ENCODE measurements at regions of chr17 and their contacts with region 1.

Region 1: GRCh38 chr17:45218895-45219661 is 2.6 kb upstream of the FMNL1 start:
- DNase-seq: peak; percentile 77
- ATAC-seq: peak; percentile 90
- H3K4me3 ChIP-seq: no peak overlapping the region
- H3K27ac ChIP-seq: no peak overlapping the region
- H3K4me1 ChIP-seq: peaks cover 9% of the 10 kb centered on the region; the same call in 1 of the 2 replicates
- H3K27me3 ChIP-seq: peaks cover 15% of the 10 kb centered on the region
- CTCF ChIP-seq: peak; percentile 98
- POLR2A ChIP-seq: peak; percentile 39; the same call in 1 of the 2 replicates
- RAD21 ChIP-seq: peak; percentile 97

Region 2: DNA sequence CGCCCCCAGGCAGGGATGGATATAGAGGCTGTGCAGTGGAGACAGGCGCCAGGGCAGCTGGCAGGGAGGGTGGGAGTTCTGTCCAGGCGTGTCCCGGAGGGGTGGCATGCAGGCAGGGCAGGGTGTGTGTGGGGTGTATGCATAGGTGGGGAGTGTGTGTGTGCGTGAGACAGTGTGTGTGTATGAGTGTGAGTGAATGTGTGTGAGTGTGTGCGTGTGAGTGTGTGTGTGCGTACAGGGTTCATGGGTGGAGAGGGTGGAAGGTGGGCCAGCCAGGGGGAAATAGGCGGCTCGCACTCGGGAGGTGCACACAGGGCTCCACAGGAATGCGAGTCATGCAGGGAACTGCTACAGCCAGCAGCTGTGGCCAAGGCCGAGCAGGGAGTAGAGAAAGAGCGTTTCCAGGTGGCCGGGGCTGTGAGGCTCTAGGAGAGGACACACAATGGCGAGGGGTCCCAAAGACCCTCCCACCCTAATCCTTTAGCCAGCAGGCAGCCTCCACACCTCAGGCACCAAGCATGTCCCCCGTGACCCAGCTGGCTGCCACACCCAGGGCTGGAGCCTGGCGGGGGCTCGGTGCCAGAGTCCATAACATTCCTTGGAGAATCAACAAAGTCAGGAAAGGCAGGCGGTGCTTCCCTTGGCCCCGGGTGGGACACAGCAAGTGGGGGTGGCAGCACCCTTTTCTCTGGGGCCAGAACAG is 91.3 kb before region 1 on chr17:
- CTCF ChIA-PET with region 1: no interaction called
- POLR2A ChIA-PET with region 1: no interaction called
- dilution Hi-C with region 1: no loop called
- in situ Hi-C with region 1: no loop called
- intact Hi-C with region 1: no loop called
- DNase-seq: peak; percentile 42
- ATAC-seq: peak; percentile 15
- H3K4me3 ChIP-seq: no peak overlapping the region
- H3K27ac ChIP-seq: peak overlapping the region; percentile 88
- H3K4me1 ChIP-seq: peaks cover 49% of the 10 kb centered on the region
- H3K27me3 ChIP-seq: no peaks in the 10 kb centered on the region
- CTCF ChIP-seq: no peak
- POLR2A ChIP-seq: no peak
- RAD21 ChIP-seq: no peak

Region 3: GRCh38 chr17:45270828-45271418 is 51.8 kb after region 1 on chr17:
- CTCF ChIA-PET with region 1: no interaction called
- POLR2A ChIA-PET with region 1: no interaction called
- dilution Hi-C with region 1: no loop called
- in situ Hi-C with region 1: no loop called
- intact Hi-C with region 1: loop called (anchors 1 kb)
- DNase-seq: no peak
- ATAC-seq: no peak
- H3K4me3 ChIP-seq: no peak overlapping the region
- H3K27ac ChIP-seq: no peak overlapping the region
- H3K4me1 ChIP-seq: peaks cover 6% of the 10 kb centered on the region
- H3K27me3 ChIP-seq: no peaks in the 10 kb centered on the region
- CTCF ChIP-seq: peak; percentile 47
- POLR2A ChIP-seq: no peak
- RAD21 ChIP-seq: peak; percentile 41

Region 4: GRCh38 chr17:45317112-45317928 is 98.2 kb after region 1 on chr17:
- CTCF ChIA-PET with region 1: no interaction called
- POLR2A ChIA-PET with region 1: no interaction called
- dilution Hi-C with region 1: no loop called
- in situ Hi-C with region 1: no loop called
- intact Hi-C with region 1: loop called (anchors 5 kb)
- DNase-seq: peak; percentile 100
- ATAC-seq: peak; percentile 85
- H3K4me3 ChIP-seq: peak overlapping the region; percentile 42
- H3K27ac ChIP-seq: peak overlapping the region; percentile 62
- H3K4me1 ChIP-seq: peaks cover 47% of the 10 kb centered on the region
- H3K27me3 ChIP-seq: no peaks in the 10 kb centered on the region
- CTCF ChIP-seq: no peak
- POLR2A ChIP-seq: no peak
- RAD21 ChIP-seq: 0 out of 2 replicates have a peak, but pooled peaks have one; percentile 14

Region 5: GRCh38 chr17:45428050-45428617 is 209.1 kb after region 1 on chr17:
- CTCF ChIA-PET with region 1: no interaction called
- POLR2A ChIA-PET with region 1: no interaction called
- dilution Hi-C with region 1: no loop called
- in situ Hi-C with region 1: no loop called
- intact Hi-C with region 1: loop called (anchors 2 kb)
- DNase-seq: peak; percentile 42
- ATAC-seq: peak; percentile 78
- H3K4me3 ChIP-seq: no peak overlapping the region
- H3K27ac ChIP-seq: no peak overlapping the region
- H3K4me1 ChIP-seq: peaks cover 6% of the 10 kb centered on the region; the same call in 1 of the 2 replicates
- H3K27me3 ChIP-seq: peaks cover 52% of the 10 kb centered on the region
- CTCF ChIP-seq: peak; percentile 86
- POLR2A ChIP-seq: no peak
- RAD21 ChIP-seq: peak; percentile 75

Region 6: GRCh38 chr17:45834471-45835396 is 615.7 kb after region 1 on chr17:
- CTCF ChIA-PET with region 1: no interaction called
- POLR2A ChIA-PET with region 1: no interaction called
- dilution Hi-C with region 1: no loop called
- in situ Hi-C with region 1: no loop called
- intact Hi-C with region 1: loop called (anchors 10 kb)
- DNase-seq: no peak
- ATAC-seq: no peak
- H3K4me3 ChIP-seq: no peak overlapping the region
- H3K27ac ChIP-seq: no peak overlapping the region
- H3K4me1 ChIP-seq: no peaks in the 10 kb centered on the region
- H3K27me3 ChIP-seq: peaks cover 15% of the 10 kb centered on the region; the same call in 1 of the 2 replicates
- CTCF ChIP-seq: no peak
- POLR2A ChIP-seq: no peak
- RAD21 ChIP-seq: no peak